ENCODE measurements at regions of chr5 and their contacts with region 1.

Region 1: DNA sequence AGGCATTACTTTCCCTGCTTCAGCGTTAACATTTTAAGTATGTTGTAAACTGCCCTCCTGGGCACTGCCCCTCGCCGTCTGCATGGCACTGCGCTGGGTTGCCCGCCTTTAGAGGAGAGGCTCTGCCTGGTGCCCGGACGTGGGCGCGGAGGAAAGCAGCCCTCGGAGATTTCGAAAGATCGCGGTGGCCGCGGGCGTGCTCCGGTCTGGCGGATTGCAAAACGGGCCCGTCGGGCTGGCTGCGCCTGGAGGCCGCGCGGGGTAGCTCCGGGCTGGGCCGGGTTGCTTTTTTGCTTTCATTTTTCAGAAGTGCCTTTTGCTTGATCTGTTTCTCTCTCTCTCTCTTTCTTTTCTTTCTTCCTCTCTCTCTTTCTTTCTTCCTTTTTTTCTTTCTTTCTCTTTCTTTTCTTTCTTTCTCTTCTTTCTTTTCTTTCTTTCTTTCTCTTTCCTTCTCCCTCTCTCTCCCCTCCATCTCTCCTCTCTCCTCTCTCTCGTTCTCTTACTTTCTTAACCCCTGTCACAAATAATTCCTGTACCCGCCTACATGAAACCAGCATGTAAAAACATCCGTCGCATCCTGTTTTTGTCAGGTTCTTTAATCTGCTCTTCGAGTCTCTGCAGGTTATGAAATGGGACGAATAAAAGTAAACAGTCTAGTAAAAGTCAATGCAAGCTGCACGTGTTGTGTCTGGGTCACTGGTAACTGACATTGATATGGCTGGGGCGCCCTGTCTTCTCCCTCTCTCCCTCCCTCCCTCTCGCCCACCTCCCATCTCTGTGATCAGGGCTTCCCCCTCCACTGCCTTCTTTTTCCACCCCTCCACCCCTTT is 1.7 kb downstream of the FST start:
- DNase-seq: peak; percentile 86
- ATAC-seq: peak; percentile 78

Region 2: DNA sequence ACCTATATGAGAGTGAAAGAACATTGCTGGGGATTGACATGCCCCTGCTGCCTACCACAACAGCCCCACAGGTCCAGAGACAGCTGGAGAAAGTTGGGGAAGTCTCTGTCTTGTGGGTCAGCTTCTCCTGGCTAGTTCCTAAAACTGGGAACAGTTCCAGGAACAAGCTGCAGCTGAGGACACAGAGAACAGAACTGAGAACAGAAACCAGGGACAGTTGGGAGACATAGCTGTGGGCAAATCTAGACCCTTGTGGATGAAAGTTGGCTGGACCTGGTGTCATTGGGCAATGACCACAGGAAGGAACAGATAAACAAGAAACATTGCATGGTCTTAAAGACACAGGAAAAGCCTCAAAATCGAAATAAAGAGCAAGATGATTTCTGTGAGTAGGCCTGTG is 314.3 kb before region 1 on chr5:
- intact Hi-C with region 1: loop called (anchors 5 kb)
- DNase-seq: peak; percentile 66
- ATAC-seq: peak; percentile 94

Region 3: GRCh38 chr5:53425598-53426511 is 56.2 kb before region 1 on chr5:
- intact Hi-C with region 1: no loop called
- DNase-seq: no peak
- ATAC-seq: no peak

Region 4: DNA sequence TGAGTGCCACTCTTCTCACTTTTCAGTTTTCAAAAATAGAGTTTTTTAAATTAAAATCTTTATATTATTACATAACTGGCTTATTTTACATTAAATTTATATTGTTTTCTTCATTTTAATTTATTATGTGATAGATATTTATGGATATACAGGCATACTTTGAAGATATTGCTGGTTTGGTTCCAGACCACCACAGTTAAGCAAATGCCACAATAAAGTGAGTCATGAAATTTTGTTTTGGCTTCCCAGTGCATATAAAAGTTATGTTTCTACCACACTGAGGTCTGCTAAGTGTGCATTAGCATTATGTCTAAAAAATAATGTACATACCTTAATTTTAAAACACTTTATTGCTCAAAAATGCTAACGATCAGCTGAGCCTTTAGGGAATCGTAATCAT is 125.8 kb after region 1 on chr5:
- intact Hi-C with region 1: no loop called
- DNase-seq: no peak
- ATAC-seq: no peak

Region 5: GRCh38 chr5:53667621-53668020 is 185.5 kb after region 1 on chr5:
- intact Hi-C with region 1: no loop called
- DNase-seq: no peak
- ATAC-seq: no peak

Region 6: DNA sequence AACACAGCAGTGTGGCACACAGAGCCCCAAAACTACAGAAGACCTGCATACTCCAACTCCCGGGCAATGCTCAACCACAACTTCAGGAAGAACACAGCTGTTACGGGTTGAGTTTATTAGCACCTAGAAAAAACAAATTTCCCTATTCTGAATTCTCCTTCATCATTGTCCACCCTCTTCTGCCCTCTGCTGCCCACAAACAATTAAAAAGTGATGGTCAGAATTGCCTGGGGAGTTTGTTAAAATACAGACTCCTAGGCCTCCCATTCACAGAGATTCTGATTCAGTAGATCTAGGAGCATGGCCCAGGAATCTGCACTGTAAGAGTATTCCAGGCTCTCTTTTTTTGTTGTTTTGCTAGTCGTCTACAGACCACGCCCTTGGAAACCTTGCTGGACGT is 388.9 kb after region 1 on chr5:
- intact Hi-C with region 1: loop called (anchors 2 kb)
- DNase-seq: no peak
- ATAC-seq: peak; percentile 20

Region 7: DNA sequence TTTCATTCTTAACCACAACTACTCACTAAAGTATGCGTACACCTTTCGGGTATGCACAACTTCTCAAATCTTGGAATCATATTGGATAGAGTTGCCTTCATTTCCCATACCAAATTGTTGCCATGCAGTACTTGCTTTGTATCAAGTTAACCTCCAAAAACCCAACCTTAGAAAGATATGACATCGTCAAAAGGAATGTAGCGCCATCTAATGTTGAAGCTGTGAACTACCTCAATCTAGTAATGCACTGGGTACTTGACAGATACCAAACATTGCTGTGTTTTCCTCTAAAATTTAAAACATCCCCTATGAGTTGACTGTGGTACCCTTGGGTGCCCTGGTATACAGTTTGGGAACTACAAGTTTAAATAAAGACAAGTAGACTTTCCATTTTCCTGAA is 509.8 kb after region 1 on chr5:
- intact Hi-C with region 1: loop called (anchors 5 kb)
- DNase-seq: no peak
- ATAC-seq: no peak

Region 8: DNA sequence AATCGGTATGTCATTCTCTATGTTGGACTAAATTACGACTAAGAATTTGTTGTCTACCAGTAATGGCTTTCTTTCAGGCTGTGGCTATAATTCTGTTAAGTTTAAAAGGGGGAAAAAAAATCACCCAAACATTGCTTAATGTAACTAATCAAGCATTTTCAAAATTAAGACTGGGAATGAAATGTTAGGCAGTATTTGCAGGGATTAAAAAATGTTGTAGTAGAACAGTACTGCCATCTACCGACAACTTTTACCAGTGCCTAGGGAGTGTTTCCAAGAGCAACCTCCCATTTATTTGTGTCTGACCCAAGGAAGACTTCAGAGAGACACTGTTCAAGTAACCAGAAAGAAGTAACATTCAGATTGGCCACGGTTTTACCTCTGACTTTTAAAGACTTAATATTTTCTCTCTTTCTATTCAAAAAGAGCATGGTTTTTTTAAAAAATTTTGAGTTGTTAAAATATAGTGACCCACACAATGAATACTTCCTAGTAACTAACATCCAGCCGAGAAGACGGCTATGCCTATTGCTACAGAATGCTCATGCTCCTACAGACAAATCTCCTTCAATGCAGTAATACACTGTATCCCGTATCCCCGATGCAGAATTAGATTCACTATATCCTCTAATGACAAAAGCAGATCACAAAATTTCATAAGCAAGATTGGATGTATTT is 735.9 kb after region 1 on chr5:
- intact Hi-C with region 1: loop called (anchors 2 kb)
- DNase-seq: no peak
- ATAC-seq: peak; percentile 76